ENCODE measurements at regions of chr2 and their contacts with region 1.

Region 1: GRCh38 chr2:224039124-224039940 is at the start of gene SERPINE2:
- DNase-seq: peak; percentile 54 to 66
- H3K4me3 ChIP-seq: peak within 1 kb of the TSS; percentile 48
- H3K4me3 Mint-ChIP-seq: peak within 1 kb of the TSS; percentile 66
- H3K27ac Mint-ChIP-seq: no peak within 1 kb of the TSS
- H3K4me1 ChIP-seq: peaks cover 7% of the 10 kb centered on the region
- H3K4me1 Mint-ChIP-seq: peaks cover 7% of the 10 kb centered on the region
- H3K27me3 ChIP-seq: peaks cover 6% of the 10 kb centered on the region
- H3K27me3 Mint-ChIP-seq: peaks cover 47% of the 10 kb centered on the region
- CTCF ChIP-seq: peak in 1 of 2 experiments; percentile 37
- total RNA-seq, gene SERPINE2: 3.8 and 4.7 TPM in 2 replicates

Region 2: DNA sequence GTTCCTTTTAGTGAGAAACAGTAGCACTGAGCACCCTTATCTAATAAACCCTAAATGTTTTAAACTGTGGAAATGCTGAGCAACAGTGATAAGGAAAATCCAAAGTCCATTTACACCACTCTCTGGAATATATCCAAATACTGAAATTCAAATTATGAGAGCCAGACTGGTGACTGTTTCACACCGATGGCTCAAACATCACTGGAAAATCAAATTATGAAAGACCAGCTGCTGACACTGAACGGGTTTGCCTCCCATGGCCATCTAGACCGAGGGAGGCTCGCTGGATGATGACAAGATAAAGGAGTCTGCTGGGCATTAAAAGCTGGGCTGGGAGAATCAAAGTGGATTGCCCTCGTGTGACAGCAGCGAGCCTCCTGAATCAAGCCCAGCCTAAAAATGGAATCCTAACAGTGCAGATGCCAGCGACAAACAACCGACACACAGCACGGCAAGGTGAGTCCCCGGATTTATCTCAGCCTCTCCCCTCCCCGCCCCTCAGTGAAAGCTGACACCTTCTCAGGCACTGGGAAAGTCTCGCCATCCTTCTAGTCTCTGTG is 30.6 kb before region 1 on chr2:
- CTCF ChIA-PET with region 1: no interaction called
- POLR2A ChIA-PET with region 1: no interaction called
- intact Hi-C with region 1: loop called (anchors 2 kb)
- DNase-seq: peak in 1 of 2 experiments; percentile 23
- H3K4me3 ChIP-seq: no peak overlapping the region
- H3K4me3 Mint-ChIP-seq: peak overlapping the region; percentile 17
- H3K27ac Mint-ChIP-seq: no peak overlapping the region
- H3K4me1 ChIP-seq: peaks cover 22% of the 10 kb centered on the region
- H3K4me1 Mint-ChIP-seq: peaks cover 28% of the 10 kb centered on the region
- H3K27me3 ChIP-seq: no peaks in the 10 kb centered on the region
- H3K27me3 Mint-ChIP-seq: no peaks in the 10 kb centered on the region
- CTCF ChIP-seq: no peak

Measured in Caco-2 (cell line).